Activated T-helper 1 cell treated with anti-CD3 and anti-CD28 coated beads, Interleukin-12 subunit alpha, Interleukin-12 subunit beta, Interleukin-2, Interleukin-4 antibody, amounts not matched to agents 30 ng/mL and 10 ng/mL and 1 ng/mL, durations not matched to agents 14 hours and 24 hours and 36 hours (primary cell): ENCODE measurements at regions of chr3 and their contacts with region 1.

Region 1: DNA sequence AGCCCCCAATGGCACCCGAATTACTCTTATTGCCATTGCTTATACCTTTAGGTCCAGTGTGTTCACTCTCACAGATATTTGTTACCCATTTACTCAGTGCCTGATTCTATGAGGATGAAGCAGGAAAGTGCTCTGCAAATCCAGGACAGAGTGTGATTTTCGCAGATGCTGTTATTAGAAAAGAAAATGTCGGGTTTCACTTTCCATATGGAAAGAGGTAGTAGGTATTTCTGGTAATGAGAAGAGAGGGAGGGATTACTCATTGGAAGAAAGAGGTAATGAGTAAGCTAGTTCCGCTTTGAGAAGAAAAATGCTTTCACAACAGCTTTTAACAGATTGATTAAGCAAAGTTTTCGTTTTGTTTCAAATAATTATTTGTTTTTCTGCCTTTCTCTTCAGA is 336.3 kb upstream of the CFAP20DC start:
- DNase-seq: no peak
- H3K4me3 Mint-ChIP-seq: peak overlapping the region; percentile 32
- H3K27ac Mint-ChIP-seq: peak overlapping the region; percentile 97
- H3K4me1 Mint-ChIP-seq: peaks cover 91% of the 10 kb centered on the region
- H3K27me3 Mint-ChIP-seq: no peaks in the 10 kb centered on the region

Region 2: DNA sequence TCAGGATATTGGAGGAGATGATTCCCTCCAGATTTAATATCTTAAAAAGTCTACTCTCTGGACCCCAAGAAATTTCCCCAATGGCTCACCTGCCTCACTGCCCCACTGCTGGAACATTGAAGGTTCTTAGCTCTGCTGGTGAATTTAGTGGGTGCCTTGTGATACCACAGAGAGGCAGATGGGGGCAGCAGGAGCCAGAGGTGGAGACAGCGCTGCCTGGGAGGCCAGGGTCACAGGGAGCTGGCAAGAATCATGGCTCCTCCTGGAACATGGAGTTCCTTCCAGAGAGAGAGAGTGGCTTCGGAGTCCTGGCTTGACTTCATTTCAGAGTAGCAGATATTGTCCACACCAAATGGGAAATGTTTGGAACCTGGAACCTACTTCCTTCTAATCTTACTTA is 72.8 kb before region 1 on chr3:
- intact Hi-C with region 1: loop called (anchors 5 kb)
- DNase-seq: peak; percentile 22
- H3K4me3 Mint-ChIP-seq: no peak overlapping the region
- H3K27ac Mint-ChIP-seq: peak overlapping the region; percentile 49
- H3K4me1 Mint-ChIP-seq: peaks cover 47% of the 10 kb centered on the region
- H3K27me3 Mint-ChIP-seq: peaks cover 2% of the 10 kb centered on the region

Region 3: DNA sequence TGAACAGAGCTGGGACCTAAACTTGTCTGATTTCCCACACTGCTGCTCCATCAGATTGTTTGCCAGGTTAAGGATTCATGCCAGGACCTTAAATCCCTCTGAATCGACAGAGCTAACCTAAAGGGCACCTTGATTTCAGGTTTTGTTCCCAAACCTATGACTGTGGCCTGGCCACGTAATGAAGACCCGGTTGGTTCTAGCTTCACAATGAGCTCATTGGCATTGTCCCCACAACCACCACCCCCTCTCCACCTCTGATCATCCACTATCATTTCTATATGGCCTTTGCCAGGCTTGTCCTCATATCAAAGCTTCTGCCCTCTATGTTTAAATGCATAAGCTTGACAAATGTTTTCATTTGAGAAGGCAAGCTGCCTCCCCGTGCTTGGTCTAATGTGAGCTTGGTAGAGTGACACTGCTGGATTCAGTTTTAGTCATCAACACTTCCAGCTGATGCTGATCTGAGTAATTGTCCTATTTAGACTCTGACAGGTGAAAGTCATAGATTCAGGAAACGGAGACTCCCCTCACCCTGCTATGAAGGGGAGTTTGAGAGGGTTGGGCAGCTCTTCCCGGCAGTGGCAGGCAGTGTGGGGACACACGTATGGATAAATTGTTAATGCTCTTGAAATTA is 70.8 kb after region 1 on chr3:
- intact Hi-C with region 1: loop called (anchors 1 kb)
- DNase-seq: peak; percentile 42
- H3K4me3 Mint-ChIP-seq: peak overlapping the region; percentile 27
- H3K27ac Mint-ChIP-seq: peak overlapping the region; percentile 41
- H3K4me1 Mint-ChIP-seq: peaks cover 59% of the 10 kb centered on the region
- H3K27me3 Mint-ChIP-seq: peaks cover 4% of the 10 kb centered on the region

Region 4: DNA sequence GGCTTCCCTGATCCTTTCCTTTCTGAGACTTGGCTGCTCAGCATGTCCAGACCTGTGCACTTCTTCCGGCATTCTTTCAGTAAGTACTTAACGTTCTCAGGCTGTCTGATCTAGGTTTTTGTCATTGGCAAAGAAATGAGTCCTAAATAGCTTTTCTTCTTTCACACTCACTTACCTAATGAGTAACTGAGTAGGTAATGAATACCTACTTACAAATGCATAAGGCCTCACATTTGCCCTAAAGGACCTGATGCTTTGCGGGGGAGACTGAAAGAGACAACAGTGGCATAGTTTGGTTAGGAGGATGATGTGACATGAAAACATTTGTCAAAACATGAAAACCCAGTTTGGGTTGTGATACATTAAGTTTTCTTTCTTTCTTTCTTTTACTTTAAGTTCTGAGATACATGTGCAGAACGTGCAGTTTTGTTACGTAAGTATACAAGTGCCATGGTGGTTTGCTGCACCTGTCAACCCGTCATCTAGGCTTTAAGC is 180.4 kb after region 1 on chr3:
- intact Hi-C with region 1: loop called (anchors 1 kb)
- DNase-seq: no peak
- H3K4me3 Mint-ChIP-seq: no peak overlapping the region
- H3K27ac Mint-ChIP-seq: peak overlapping the region; percentile 36
- H3K4me1 Mint-ChIP-seq: peaks cover 12% of the 10 kb centered on the region
- H3K27me3 Mint-ChIP-seq: no peaks in the 10 kb centered on the region

Region 5: DNA sequence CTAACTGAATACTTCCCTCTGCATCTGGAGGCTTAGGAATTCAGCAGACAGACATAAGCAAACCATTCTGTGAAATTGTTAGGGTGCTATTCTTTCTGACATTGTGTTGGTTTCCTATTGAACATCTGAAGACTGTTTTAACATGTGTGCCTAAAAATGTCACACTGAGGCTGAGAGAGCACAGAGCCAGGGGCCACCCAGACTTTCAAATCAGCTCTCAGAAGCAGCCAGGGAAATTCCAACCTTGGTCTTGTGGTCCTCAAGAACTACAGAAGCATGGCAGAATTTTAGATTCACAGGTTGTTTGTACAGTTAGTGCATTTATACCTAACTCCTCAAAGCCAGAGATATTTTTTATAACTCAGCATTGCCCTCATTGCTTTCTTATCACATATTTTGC is 592.8 kb after region 1 on chr3:
- intact Hi-C with region 1: loop called (anchors 1 kb)
- DNase-seq: peak; percentile 38
- H3K4me3 Mint-ChIP-seq: peak overlapping the region; percentile 64
- H3K27ac Mint-ChIP-seq: peak overlapping the region; percentile 93
- H3K4me1 Mint-ChIP-seq: peaks cover 45% of the 10 kb centered on the region
- H3K27me3 Mint-ChIP-seq: no peaks in the 10 kb centered on the region

Region 6: GRCh38 chr3:60365360-60365759 is 979.2 kb after region 1 on chr3:
- intact Hi-C with region 1: loop called (anchors 5 kb)
- DNase-seq: no peak
- H3K4me3 Mint-ChIP-seq: no peak overlapping the region
- H3K27ac Mint-ChIP-seq: peak overlapping the region; percentile 46
- H3K4me1 Mint-ChIP-seq: peaks cover 27% of the 10 kb centered on the region
- H3K27me3 Mint-ChIP-seq: no peaks in the 10 kb centered on the region